ENCODE measurements at regions of chr11 and their contacts with region 1.

Region 1: GRCh38 chr11:59668950-59669610 is at the start of gene PATL1:
- DNase-seq: peak; percentile 99
- H3K4me3 ChIP-seq: peak within 1 kb of the TSS; percentile 82 to 86 (median 82)
- H3K27ac ChIP-seq: peak within 1 kb of the TSS; percentile 97
- H3K4me1 ChIP-seq: peaks cover 18% of the 10 kb centered on the region
- H3K27me3 ChIP-seq: no peaks in the 10 kb centered on the region
- CTCF ChIP-seq: no peak
- POLR2A ChIP-seq: peak; percentile 95
- total RNA-seq, gene PATL1: 33.1 and 38.8 TPM in 2 replicates

Region 2: DNA sequence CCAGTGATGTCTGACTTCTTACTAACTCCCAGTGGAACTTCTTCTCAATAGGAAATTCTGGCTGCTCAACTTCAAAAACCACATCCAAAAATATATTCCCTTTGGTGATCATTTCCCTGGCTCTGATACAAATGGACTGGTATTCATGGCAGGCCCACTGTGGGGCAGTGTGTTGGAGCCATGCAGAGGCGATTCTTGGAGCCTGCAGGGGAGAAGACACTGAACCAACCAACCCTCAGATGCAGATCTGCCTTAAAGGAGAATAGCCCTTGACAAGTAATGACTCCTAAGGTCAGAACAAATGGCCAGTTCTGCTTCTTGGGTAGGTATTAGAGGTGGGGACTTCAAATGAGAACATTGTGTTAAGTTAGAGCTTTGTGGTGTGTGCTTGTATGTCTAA is 145.5 kb before region 1 on chr11:
- CTCF ChIA-PET with region 1: no interaction called
- POLR2A ChIA-PET with region 1: no interaction called
- dilution Hi-C with region 1: no loop called
- intact Hi-C with region 1: no loop called
- DNase-seq: no peak
- H3K4me3 ChIP-seq: no peak overlapping the region
- H3K27ac ChIP-seq: no peak overlapping the region
- H3K4me1 ChIP-seq: no peaks in the 10 kb centered on the region
- H3K27me3 ChIP-seq: peaks cover 10% of the 10 kb centered on the region in 2 experiments
- CTCF ChIP-seq: peak in 1 of 2 donors; percentile 8
- POLR2A ChIP-seq: no peak

Region 3: DNA sequence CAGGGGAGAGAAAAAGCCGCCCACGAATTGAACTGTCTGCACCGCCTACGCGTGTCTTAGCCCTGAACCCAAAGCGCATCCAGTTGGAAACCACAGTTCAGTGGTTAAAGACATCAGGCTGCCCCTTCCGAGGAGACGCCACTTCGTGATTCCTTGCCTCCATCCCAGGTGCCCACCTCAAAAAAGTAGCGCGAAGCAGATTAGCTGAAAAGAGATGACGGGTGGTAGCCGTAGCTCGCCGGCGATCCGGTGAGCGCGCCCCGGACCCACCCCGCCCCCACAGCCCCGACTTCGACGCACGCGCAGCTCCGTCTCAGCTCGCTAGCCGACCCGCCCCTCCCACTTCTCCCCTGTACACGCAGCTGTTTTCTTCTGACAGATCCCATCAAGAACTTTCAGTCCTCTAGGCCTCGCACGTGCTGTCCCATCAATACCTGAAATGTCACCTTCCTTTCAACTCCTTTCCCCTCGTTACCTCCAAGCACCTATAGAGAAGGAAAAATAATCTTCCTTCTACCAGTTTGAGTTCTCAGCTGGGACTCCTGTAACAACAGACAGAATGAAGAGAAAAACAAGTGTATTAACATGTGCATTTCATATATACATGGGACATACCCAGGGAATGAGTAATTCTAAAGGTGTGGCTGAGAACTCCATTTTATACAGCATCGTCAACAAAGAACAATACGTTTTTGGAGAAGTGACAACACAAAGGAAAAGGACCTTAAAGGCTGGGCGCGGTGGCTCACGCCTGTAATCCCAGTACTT is 108.2 kb before region 1 on chr11:
- CTCF ChIA-PET with region 1: interaction called, 3 read pairs
- POLR2A ChIA-PET with region 1: interaction called, 6 read pairs
- dilution Hi-C with region 1: no loop called
- intact Hi-C with region 1: loop called (anchors 1 kb)
- DNase-seq: peak; percentile 88
- H3K4me3 ChIP-seq: peak overlapping the region; percentile 50 to 93 (median 70)
- H3K27ac ChIP-seq: peak overlapping the region; percentile 60
- H3K4me1 ChIP-seq: peaks cover 9% of the 10 kb centered on the region
- H3K27me3 ChIP-seq: no peaks in the 10 kb centered on the region
- CTCF ChIP-seq: no peak
- POLR2A ChIP-seq: no peak

Region 4: GRCh38 chr11:59615637-59616395 is 53.3 kb before region 1 on chr11 and contains the start of gene OSBP:
- CTCF ChIA-PET with region 1: interaction called, 3 read pairs
- POLR2A ChIA-PET with region 1: interaction called, 4 read pairs
- dilution Hi-C with region 1: no loop called
- intact Hi-C with region 1: loop called (anchors 1 kb)
- DNase-seq: peak; percentile 100
- H3K4me3 ChIP-seq: peak within 1 kb of the TSS; percentile 74 to 90 (median 81)
- H3K27ac ChIP-seq: peak within 1 kb of the TSS; percentile 62
- H3K4me1 ChIP-seq: peaks cover 17% of the 10 kb centered on the region
- H3K27me3 ChIP-seq: no peaks in the 10 kb centered on the region
- CTCF ChIP-seq: no peak
- POLR2A ChIP-seq: peak; percentile 84
- total RNA-seq, gene OSBP: 37.5 and 37.9 TPM in 2 replicates

Region 5: GRCh38 chr11:59706518-59707285 is 37.6 kb after region 1 on chr11:
- CTCF ChIA-PET with region 1: no interaction called
- POLR2A ChIA-PET with region 1: interaction called, 4 read pairs
- dilution Hi-C with region 1: no loop called
- intact Hi-C with region 1: loop called (anchors 1 kb)
- DNase-seq: peak; percentile 95
- H3K4me3 ChIP-seq: no peak overlapping the region
- H3K27ac ChIP-seq: peak overlapping the region; percentile 93
- H3K4me1 ChIP-seq: peaks cover 18% of the 10 kb centered on the region
- H3K27me3 ChIP-seq: no peaks in the 10 kb centered on the region
- CTCF ChIP-seq: no peak
- POLR2A ChIP-seq: peak; percentile 86

Region 6: DNA sequence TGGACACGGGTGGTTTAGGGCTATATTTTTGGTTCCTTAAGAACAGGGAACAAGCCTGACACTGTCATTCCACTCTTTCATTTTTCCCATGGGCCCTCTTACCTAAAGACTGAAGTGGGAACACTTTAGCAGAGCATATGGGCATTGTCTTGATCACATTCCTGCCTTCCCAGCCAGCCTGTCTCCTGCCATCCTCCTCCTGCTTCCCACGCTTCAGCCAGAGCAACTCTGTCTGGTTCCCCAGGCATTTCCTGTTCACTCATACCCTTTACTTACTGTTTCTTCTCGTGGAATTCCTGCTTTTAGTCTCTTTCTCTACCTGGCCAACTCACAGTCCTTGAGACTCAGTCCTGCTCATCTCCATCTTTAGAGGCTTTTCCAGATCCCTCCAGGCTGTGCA is 118.7 kb after region 1 on chr11:
- CTCF ChIA-PET with region 1: no interaction called
- POLR2A ChIA-PET with region 1: interaction called, 7 read pairs
- dilution Hi-C with region 1: no loop called
- intact Hi-C with region 1: loop called (anchors 1 kb)
- DNase-seq: peak; percentile 84
- H3K4me3 ChIP-seq: no peak overlapping the region
- H3K27ac ChIP-seq: peak overlapping the region; percentile 86
- H3K4me1 ChIP-seq: peaks cover 27% of the 10 kb centered on the region
- H3K27me3 ChIP-seq: no peaks in the 10 kb centered on the region
- CTCF ChIP-seq: no peak
- POLR2A ChIP-seq: no peak

Region 7: DNA sequence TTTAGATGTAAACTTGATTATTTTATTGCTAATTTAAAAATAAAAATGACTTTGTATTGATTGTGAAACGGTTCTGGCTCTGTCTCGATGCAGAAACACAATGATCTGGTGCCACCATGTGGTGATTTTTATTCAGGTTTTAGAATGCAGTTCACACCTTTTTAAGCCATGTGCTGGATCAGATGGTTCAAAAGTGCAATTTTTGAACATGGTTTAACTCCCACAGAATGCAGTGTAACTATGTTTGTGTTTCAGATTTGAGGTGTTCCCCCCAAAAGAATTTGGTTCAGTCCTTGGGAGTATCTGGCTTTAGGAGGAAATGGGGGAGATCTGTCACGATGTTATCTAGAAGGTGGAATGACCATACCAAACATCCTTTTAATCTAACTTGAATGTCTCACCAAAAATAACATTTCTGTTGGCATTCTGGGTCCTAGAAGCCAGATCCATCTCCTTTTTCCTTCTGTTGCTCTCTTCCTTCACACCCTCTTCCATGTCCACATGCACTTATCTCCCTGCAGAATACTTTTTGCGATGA is 133.6 kb after region 1 on chr11:
- CTCF ChIA-PET with region 1: interaction called, 12 read pairs
- POLR2A ChIA-PET with region 1: interaction called, 7 read pairs
- dilution Hi-C with region 1: no loop called
- intact Hi-C with region 1: loop called (anchors 1 kb)
- DNase-seq: peak; percentile 79
- H3K4me3 ChIP-seq: no peak overlapping the region
- H3K27ac ChIP-seq: peak overlapping the region; percentile 83
- H3K4me1 ChIP-seq: peaks cover 9% of the 10 kb centered on the region
- H3K27me3 ChIP-seq: no peaks in the 10 kb centered on the region
- CTCF ChIP-seq: peak; percentile 34 to 47
- POLR2A ChIP-seq: no peak